ENCODE measurements at regions of chr5 and their contacts with region 1.

Region 1: DNA sequence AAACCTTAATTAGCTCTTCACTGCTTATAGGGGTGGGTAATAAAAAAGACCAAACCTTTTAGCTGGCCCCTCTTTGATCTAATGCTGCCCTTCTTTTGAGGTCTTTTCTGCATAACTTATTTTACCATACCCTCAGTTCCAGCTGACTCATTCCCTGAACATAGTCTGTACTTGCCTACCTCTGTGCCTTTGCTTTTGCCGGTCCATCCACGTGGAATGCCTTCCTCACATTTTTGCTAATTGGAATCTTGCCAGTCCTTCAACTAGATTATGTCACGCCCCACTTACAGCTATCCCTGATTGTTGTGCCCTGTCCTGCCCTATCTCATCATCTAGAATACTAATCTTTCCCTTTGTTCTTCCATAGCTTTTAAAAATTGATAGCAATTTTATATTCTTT is 44.2 kb downstream of the FAF2 start:
- DNase-seq: no peak
- H3K4me3 ChIP-seq: no peak overlapping the region
- H3K27ac ChIP-seq: no peak overlapping the region
- H3K4me1 ChIP-seq: peaks cover 55% of the 10 kb centered on the region
- H3K27me3 ChIP-seq: no peaks in the 10 kb centered on the region
- CTCF ChIP-seq: no peak

Region 2: GRCh38 chr5:176144508-176144907 is 347.9 kb before region 1 on chr5:
- CTCF ChIA-PET with region 1: no interaction called
- POLR2A ChIA-PET with region 1: no interaction called
- intact Hi-C with region 1: no loop called
- DNase-seq: no peak
- H3K4me3 ChIP-seq: no peak overlapping the region
- H3K27ac ChIP-seq: no peak overlapping the region
- H3K4me1 ChIP-seq: no peaks in the 10 kb centered on the region
- H3K27me3 ChIP-seq: peaks cover 97% of the 10 kb centered on the region
- CTCF ChIP-seq: no peak

Region 3: DNA sequence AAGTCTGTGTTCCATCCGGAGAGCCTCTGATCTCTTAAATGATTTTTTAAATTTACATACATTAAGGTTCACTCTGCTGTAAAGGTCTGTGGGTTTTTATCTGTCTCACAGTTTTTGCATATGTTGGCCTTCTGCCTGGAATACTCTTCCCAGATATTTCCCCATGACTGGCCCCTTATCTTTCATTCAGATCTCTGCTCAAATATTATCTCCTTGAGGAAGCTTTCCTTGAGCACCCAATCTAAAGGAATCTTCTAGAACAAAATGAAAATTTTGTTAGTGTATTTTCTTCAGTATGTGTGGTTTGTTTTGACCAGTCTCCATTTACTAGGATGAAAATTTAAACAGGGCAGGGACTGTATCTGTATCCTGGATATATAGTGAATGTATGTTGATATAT is 17.9 kb before region 1 on chr5:
- CTCF ChIA-PET with region 1: no interaction called
- POLR2A ChIA-PET with region 1: no interaction called
- intact Hi-C with region 1: no loop called
- DNase-seq: no peak
- H3K4me3 ChIP-seq: no peak overlapping the region
- H3K27ac ChIP-seq: peak overlapping the region; percentile 20; the same call in 1 of the 2 replicates
- H3K4me1 ChIP-seq: peaks cover 16% of the 10 kb centered on the region; the same call in 1 of the 2 replicates
- H3K27me3 ChIP-seq: no peaks in the 10 kb centered on the region
- CTCF ChIP-seq: no peak

Region 4: GRCh38 chr5:176543428-176544173 is 51.2 kb after region 1 on chr5:
- CTCF ChIA-PET with region 1: interaction called, 12 read pairs
- POLR2A ChIA-PET with region 1: no interaction called
- intact Hi-C with region 1: no loop called
- DNase-seq: peak; percentile 74 to 76
- H3K4me3 ChIP-seq: peak overlapping the region; percentile 91
- H3K27ac ChIP-seq: peak overlapping the region; percentile 58
- H3K4me1 ChIP-seq: peaks cover 58% of the 10 kb centered on the region
- H3K27me3 ChIP-seq: no peaks in the 10 kb centered on the region
- CTCF ChIP-seq: 0 out of 2 replicates have a peak, but pooled peaks have one; percentile 14